ENCODE measurements at regions of chr22 and their contacts with region 1.

Region 1: GRCh38 chr22:38506118-38506962 is at the start of gene DDX17:
- DNase-seq: peak; percentile 97
- H3K4me3 Mint-ChIP-seq: peak within 1 kb of the TSS; percentile 100
- H3K27ac Mint-ChIP-seq: peak within 1 kb of the TSS; percentile 100
- H3K4me1 Mint-ChIP-seq: peaks cover 41% of the 10 kb centered on the region
- H3K27me3 Mint-ChIP-seq: no peaks in the 10 kb centered on the region
- total RNA-seq, gene DDX17: 353 to 358 TPM

Region 2: DNA sequence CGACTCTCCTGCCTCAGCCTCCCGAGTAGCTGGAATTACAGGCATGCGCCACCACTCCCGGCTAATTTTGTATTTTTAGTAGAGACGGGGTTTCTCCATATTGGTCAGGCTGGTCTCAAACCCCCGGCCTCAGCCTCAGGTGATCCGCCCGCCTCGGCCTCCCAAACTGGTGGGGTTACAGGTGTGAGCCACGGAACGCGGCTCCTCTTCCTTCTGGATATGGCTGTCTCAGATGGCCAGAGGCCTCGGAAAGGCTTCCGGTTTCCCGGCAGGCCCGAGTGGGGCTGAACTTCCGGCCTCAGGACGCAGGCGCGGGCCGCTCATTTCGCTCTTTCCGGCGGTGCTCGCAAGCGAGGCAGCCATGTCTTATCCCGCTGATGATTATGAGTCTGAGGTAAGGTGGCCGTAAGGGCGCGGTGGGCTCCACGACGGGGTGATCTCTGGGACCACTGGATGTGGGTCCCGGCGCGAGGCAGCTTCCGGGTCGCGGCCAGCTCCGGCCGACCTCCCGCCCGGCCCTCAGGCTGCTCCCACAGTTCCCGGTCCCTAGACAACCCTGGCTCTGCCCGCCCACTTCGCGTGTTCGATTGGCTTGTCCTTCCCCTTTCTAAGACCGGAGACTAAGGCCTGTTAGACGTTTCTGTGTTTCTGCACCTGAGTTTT is 657.1 kb before region 1 on chr22 and contains the start of gene EIF3L:
- CTCF ChIA-PET with region 1: no interaction called
- POLR2A ChIA-PET with region 1: no interaction called
- intact Hi-C with region 1: loop called (anchors 10 kb)
- DNase-seq: peak; percentile 94
- H3K4me3 Mint-ChIP-seq: peak within 1 kb of the TSS; percentile 91
- H3K27ac Mint-ChIP-seq: peak within 1 kb of the TSS; percentile 93
- H3K4me1 Mint-ChIP-seq: peaks cover 45% of the 10 kb centered on the region
- H3K27me3 Mint-ChIP-seq: no peaks in the 10 kb centered on the region
- total RNA-seq, gene EIF3L: 656 to 664 TPM

Region 3: GRCh38 chr22:38398609-38399461 is 107.5 kb before region 1 on chr22:
- CTCF ChIA-PET with region 1: no interaction called
- POLR2A ChIA-PET with region 1: no interaction called
- intact Hi-C with region 1: loop called (anchors 1 kb)
- DNase-seq: peak; percentile 85
- H3K4me3 Mint-ChIP-seq: peak overlapping the region; percentile 73
- H3K27ac Mint-ChIP-seq: peak overlapping the region; percentile 56
- H3K4me1 Mint-ChIP-seq: peaks cover 28% of the 10 kb centered on the region
- H3K27me3 Mint-ChIP-seq: peaks cover 2% of the 10 kb centered on the region

Region 4: DNA sequence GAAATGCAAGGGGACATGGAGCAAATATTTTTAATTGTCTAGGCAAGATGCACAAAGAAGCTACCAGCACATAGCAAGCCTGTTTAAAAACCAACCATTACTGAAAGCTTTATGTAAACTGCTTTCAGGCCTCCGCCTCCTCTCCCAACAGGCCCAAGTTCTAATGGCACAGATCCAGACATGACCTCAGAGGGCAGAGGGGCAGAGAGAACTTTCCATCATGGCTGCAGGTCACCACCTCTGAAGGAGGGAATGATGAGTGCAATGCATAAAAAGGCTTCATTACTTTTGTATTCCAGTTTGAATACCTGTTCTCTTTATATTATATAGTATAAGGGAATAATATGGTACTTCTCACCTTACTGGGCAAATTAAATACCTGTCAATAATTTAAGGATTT is 15.4 kb before region 1 on chr22:
- CTCF ChIA-PET with region 1: interaction called, 4 read pairs
- POLR2A ChIA-PET with region 1: interaction called, 9 read pairs
- intact Hi-C with region 1: loop called (anchors 2 kb)
- DNase-seq: no peak
- H3K4me3 Mint-ChIP-seq: no peak overlapping the region
- H3K27ac Mint-ChIP-seq: peak overlapping the region; percentile 79
- H3K4me1 Mint-ChIP-seq: peaks cover 54% of the 10 kb centered on the region
- H3K27me3 Mint-ChIP-seq: no peaks in the 10 kb centered on the region

Region 5: DNA sequence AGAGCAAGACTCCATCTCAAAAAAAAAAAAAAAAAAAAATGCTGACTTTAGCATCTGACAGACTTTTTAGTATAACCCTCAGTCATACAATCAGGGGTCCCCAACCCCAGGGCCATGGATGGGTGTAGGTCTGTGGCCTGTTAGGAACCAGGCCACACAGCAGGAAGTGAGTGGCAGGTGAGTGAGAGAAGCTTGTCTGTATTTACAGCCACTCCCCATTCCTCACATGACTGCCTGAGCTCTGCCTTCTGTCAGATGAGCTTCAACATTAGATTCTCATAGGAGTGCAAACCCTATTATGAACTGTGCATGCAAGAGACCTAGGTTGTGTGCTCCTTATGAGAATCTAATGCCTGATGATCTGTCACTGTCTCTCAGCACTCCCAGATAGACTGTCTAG is 146.5 kb after region 1 on chr22:
- CTCF ChIA-PET with region 1: no interaction called
- POLR2A ChIA-PET with region 1: no interaction called
- intact Hi-C with region 1: no loop called
- DNase-seq: no peak
- H3K4me3 Mint-ChIP-seq: no peak overlapping the region
- H3K27ac Mint-ChIP-seq: no peak overlapping the region
- H3K4me1 Mint-ChIP-seq: peaks cover 9% of the 10 kb centered on the region
- H3K27me3 Mint-ChIP-seq: no peaks in the 10 kb centered on the region

Measured in activated CD4-positive, alpha-beta memory T cell treated with anti-CD3 and anti-CD28 coated beads for 36 hours (primary cell).